Activated naive CD4-positive, alpha-beta T cell treated with anti-CD3 and anti-CD28 coated beads for 36 hours (primary cell): ENCODE measurements at regions of chr3 and their contacts with region 1.

Region 1: DNA sequence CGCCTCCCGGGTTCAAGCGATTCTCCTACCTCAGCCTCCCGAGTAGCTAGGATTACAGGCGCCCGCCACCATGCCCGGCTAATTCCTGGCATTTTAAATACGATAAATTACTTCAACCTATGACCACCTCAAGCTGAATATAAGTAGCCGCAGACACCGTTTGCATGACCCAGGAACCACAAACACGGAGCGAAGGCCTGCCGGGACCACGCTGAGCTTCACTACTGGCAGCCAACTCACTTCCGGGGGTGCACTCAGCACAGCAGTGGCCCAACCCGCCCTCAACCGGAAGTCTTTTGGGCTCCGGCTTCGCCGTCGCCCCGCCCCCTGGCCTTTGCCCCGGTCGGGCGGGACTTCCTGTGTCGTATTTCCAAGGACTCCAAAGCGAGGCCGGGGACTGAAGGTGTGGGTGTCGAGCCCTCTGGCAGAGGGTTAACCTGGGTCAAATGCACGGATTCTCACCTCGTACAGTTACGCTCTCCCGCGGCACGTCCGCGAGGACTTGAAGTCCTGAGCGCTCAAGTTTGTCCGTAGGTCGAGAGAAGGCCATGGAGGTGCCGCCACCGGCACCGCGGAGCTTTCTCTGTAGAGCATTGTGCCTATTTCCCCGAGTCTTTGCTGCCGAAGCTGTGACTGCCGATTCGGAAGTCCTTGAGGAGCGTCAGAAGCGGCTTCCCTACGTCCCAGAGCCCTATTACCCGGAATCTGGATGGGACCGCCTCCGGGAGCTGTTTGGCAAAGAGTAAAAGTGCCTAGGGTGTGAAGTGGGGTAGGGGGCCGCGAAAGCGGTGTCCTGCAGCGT is at the start of gene TIMMDC1:
- DNase-seq: peak; percentile 98
- H3K4me3 Mint-ChIP-seq: peak within 1 kb of the TSS; percentile 99
- H3K27ac Mint-ChIP-seq: peak within 1 kb of the TSS; percentile 94
- H3K4me1 Mint-ChIP-seq: peaks cover 37% of the 10 kb centered on the region
- H3K27me3 Mint-ChIP-seq: no peaks in the 10 kb centered on the region
- total RNA-seq, gene TIMMDC1: 75.6 to 83.8 TPM

Region 2: GRCh38 chr3:119420196-119420595 is 78.2 kb before region 1 on chr3:
- CTCF ChIA-PET with region 1: no interaction called
- intact Hi-C with region 1: no loop called
- DNase-seq: no peak
- H3K4me3 Mint-ChIP-seq: no peak overlapping the region
- H3K27ac Mint-ChIP-seq: no peak overlapping the region
- H3K4me1 Mint-ChIP-seq: no peaks in the 10 kb centered on the region
- H3K27me3 Mint-ChIP-seq: no peaks in the 10 kb centered on the region

Region 3: GRCh38 chr3:119469381-119470189 is 28.8 kb before region 1 on chr3:
- CTCF ChIA-PET with region 1: interaction called, 9 read pairs
- intact Hi-C with region 1: loop called (anchors 1 kb)
- DNase-seq: no peak
- H3K4me3 Mint-ChIP-seq: peak overlapping the region; percentile 85
- H3K27ac Mint-ChIP-seq: peak overlapping the region; percentile 90
- H3K4me1 Mint-ChIP-seq: peaks cover 31% of the 10 kb centered on the region
- H3K27me3 Mint-ChIP-seq: no peaks in the 10 kb centered on the region

Region 4: GRCh38 chr3:119559441-119559963 is 61.1 kb after region 1 on chr3 and contains the start of gene CD80:
- CTCF ChIA-PET with region 1: no interaction called
- intact Hi-C with region 1: loop called (anchors 2 kb)
- DNase-seq: peak; percentile 81
- H3K4me3 Mint-ChIP-seq: no peak within 1 kb of the TSS
- H3K27ac Mint-ChIP-seq: no peak within 1 kb of the TSS
- H3K4me1 Mint-ChIP-seq: peaks cover 10% of the 10 kb centered on the region
- H3K27me3 Mint-ChIP-seq: no peaks in the 10 kb centered on the region
- total RNA-seq, gene CD80: 0.14 to 0.40 TPM

Region 5: DNA sequence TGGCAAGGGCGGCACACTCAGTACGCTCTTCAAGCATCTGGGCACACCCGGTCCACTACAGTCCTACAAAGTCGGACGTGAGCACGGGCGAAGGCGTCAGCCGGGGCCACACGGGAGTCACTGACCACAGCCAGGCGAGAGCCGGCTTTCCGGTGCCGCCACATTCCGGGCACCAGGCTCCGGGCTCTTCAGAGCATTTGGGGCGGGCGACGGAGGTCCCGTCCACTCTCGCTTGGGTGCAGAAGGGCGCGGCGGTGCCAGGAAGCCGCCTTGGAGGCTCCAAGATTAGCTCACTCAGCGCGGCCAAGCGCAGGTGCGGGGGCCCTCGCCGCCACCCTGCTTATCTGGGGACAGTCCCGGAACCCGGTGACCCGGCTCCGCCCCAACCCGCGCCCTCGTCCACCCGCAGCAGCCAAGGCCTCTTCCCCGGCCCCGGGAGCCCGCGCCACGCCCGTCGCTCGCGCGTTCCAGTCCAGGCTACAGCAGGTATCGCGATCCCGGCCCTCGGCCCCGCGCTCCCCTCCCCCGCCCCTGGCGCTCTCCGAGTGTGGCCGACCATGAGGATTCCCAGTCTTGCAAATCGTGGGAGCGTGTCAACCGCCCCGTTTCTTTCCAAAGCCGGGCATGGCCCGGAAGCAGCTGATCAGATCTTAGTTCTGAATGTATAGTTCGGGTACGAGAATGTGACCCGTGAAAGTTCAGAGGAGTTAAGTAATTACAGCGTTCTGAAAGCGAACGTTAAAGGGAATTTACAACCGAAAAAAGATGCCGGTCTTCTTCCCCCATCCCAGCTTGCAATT is 81.2 kb after region 1 on chr3 and contains the start of gene ADPRH:
- CTCF ChIA-PET with region 1: no interaction called
- intact Hi-C with region 1: loop called (anchors 1 kb)
- DNase-seq: peak; percentile 66
- H3K4me3 Mint-ChIP-seq: peak within 1 kb of the TSS; percentile 86
- H3K27ac Mint-ChIP-seq: peak within 1 kb of the TSS; percentile 54
- H3K4me1 Mint-ChIP-seq: peaks cover 15% of the 10 kb centered on the region
- H3K27me3 Mint-ChIP-seq: peaks cover 18% of the 10 kb centered on the region
- total RNA-seq, gene ADPRH: 2.6 to 3.1 TPM

Region 6: DNA sequence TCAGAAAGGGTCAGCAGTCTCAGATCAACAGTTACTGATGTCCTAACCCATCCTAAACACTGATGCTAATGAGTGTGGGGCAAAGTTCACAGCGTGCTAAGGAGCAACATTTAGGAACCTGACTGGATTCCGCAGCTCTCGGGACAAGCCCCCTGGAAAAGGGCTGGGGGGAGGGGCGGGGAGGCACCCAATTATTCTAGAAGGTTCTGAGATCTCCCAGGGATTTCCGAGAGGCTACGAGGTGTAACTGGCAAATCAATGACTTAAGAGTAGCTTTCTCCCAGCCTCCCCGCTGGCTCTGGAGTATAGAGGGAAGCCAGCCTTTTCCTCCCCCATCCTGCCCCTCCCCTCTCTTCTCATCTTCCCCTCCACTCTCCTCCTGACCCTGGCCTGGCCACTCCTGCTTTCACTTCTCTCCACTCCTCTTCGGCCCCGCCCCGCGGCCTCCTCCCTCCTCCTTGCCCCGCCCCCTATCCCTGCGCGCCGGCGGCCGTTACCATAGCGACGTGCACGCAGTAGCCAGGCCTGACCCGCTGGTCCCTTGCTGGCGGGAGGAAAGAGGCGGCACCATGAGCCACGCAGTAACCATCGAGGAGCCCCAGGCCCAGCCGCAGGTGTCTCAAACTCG is 204.3 kb after region 1 on chr3 and contains the start of gene CFAP91:
- CTCF ChIA-PET with region 1: no interaction called
- intact Hi-C with region 1: loop called (anchors 1 kb)
- DNase-seq: peak; percentile 83
- H3K4me3 Mint-ChIP-seq: peak within 1 kb of the TSS; percentile 72
- H3K27ac Mint-ChIP-seq: no peak within 1 kb of the TSS
- H3K4me1 Mint-ChIP-seq: peaks cover 45% of the 10 kb centered on the region
- H3K27me3 Mint-ChIP-seq: peaks cover 2% of the 10 kb centered on the region
- total RNA-seq, gene CFAP91: 0.26 to 0.57 TPM